ENCODE measurements at regions of chr20 and their contacts with region 1.

Region 1: DNA sequence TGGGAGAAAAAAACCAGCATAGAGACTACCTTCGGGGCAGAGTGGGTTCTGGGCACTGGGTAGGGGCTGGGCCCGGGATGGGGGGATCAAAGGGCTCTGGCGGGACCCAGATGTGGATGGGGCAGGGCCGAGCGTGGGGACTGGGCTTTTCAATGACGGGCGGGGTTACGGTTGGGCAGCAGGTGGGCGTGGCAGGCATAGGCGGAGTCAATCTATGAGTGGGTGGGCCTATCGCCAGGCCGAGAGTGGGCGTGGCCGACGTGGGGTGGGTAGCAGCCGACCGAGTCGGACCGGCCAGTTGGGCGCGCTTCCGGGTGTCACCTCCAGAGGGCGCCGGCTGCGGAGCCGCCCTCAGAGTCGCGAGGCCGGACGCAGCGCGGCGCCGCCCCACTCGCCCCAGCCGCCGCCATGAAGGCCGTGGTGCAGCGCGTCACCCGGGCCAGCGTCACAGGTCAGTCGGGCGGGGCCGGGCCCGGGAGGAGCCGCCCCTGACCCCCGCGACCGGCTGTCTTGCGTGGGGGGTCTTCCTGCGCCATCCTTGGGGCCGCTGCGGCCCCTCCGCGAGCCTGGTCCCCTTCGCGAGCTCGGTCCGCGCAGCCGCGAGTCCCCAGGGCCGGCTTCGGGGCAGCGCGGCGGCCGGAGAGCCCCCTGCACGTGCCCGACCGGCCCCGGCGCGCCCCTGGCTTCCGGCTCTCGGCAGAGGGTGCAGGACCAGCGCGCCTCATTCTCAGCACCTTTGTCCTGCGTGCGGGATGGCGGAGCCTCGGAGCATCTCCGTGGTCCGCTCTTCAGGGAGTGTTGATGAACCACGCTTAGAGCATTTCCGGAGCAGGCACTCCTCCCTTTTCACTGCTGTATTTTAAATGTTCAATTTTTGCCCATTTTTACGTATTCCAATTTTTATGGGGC is at the start of gene DTD1:
- DNase-seq: peak; percentile 66 to 95
- H3K4me3 ChIP-seq: peak within 1 kb of the TSS; percentile 50
- H3K27ac ChIP-seq: peak within 1 kb of the TSS; percentile 25
- H3K4me1 ChIP-seq: peaks cover 12% of the 10 kb centered on the region; the same call in 1 of the 2 replicates
- H3K27me3 ChIP-seq: no peaks in the 10 kb centered on the region
- CTCF ChIP-seq: peak; percentile 75
- total RNA-seq, gene DTD1: 62.8 and 80.9 TPM in 2 replicates

Region 2: DNA sequence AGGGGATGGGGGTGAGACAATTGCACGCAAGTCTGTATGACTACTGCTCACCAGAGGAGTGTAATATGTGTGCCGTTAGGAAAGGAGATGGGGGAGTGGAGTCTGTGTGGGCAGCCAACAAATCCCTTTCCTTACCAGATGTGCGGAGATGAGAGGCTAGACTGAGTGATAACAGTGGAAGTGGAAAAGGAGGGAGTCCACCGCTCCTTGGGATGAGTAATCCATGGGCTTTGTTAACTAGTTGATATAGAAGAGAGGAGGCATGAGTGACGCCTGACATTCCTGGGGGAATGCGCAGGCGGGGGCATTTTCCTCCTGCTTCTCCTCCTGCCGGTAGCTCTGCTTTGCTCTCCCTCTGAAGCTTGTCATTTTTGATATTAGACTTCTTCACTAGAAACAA is 34.2 kb before region 1 on chr20:
- CTCF ChIA-PET with region 1: no interaction called
- POLR2A ChIA-PET with region 1: interaction called, 14 read pairs
- intact Hi-C with region 1: no loop called
- DNase-seq: no peak
- H3K4me3 ChIP-seq: no peak overlapping the region
- H3K27ac ChIP-seq: no peak overlapping the region
- H3K4me1 ChIP-seq: no peaks in the 10 kb centered on the region
- H3K27me3 ChIP-seq: no peaks in the 10 kb centered on the region
- CTCF ChIP-seq: no peak

Region 3: GRCh38 chr20:18566892-18567742 is 20.8 kb before region 1 on chr20 and contains the start of gene SMIM26:
- CTCF ChIA-PET with region 1: no interaction called
- POLR2A ChIA-PET with region 1: no interaction called
- intact Hi-C with region 1: loop called (anchors 1 kb)
- DNase-seq: peak; percentile 88 to 92
- H3K4me3 ChIP-seq: peak within 1 kb of the TSS; percentile 81
- H3K27ac ChIP-seq: peak within 1 kb of the TSS; percentile 74
- H3K4me1 ChIP-seq: 0 out of 2 replicates have a peak, but pooled peaks cover 7% of the 10 kb centered on the region
- H3K27me3 ChIP-seq: no peaks in the 10 kb centered on the region
- CTCF ChIP-seq: no peak
- total RNA-seq, gene SMIM26: 105 and 114 TPM in 2 replicates